CD4-positive, alpha-beta T cell (primary cell): ENCODE measurements at regions of chr22 and their contacts with region 1.

Region 1: DNA sequence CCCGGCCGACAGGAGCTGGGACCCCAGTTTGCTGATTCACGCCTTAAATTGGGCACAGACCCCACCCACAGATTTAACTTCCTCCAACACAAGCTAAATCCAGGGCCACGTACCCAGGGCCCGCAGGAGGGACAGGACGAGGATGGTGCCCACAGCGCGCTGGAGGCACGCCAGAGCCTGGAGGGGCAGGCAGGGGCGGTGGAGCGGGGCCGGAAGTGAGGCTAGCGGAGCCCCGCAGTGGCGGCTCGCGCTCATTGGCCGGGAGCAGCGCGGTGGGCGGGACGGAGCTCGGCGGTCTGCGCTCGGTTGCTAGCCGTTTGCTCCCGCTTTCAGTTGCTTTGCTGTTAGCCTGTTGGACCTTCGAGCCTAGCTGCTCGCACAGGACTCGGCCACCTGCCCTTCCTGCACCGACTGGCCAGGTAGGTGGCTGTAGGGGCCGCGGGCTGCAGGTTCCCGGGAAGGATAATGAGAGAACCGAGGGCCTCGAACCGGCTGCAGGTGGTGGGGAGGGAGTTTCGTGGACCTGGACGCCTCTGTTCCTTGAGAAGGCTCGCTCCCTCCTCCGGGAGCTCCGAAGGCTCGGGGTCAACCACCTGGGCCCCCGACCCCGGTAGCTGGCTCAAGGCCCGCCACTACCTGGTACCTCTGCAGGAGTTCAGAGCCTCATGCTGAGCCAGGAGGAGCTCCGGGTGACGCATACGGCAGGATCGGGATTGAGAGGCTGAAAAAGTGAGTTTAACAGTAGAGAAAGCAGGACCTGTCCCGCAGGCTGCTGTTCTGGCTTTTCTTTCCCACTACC is at the start of gene CCDC134:
- DNase-seq: peak; percentile 85 to 95 (median 90)
- ATAC-seq: peak; percentile 95
- H3K4me3 ChIP-seq: peak within 1 kb of the TSS; percentile 80
- H3K4me3 Mint-ChIP-seq: peak within 1 kb of the TSS; percentile 98
- H3K27ac ChIP-seq: peak within 1 kb of the TSS; percentile 87 to 91
- H3K27ac Mint-ChIP-seq: peak within 1 kb of the TSS; percentile 100
- H3K4me1 ChIP-seq: peaks cover 34% of the 10 kb centered on the region
- H3K4me1 Mint-ChIP-seq: peaks cover 40% of the 10 kb centered on the region
- H3K27me3 ChIP-seq: no peaks in the 10 kb centered on the region
- H3K27me3 Mint-ChIP-seq: no peaks in the 10 kb centered on the region
- CTCF ChIP-seq: no peak
- total RNA-seq, gene CCDC134: 14.1 to 16.2 TPM

Region 2: GRCh38 chr22:41666661-41667258 is 133.8 kb before region 1 on chr22:
- CTCF ChIA-PET with region 1: interaction called, 6 read pairs
- POLR2A ChIA-PET with region 1: interaction called, 12 read pairs
- intact Hi-C with region 1: no loop called
- DNase-seq: peak; percentile 84 to 97 (median 93)
- ATAC-seq: peak; percentile 92
- H3K4me3 ChIP-seq: peak overlapping the region; percentile 58
- H3K4me3 Mint-ChIP-seq: peak overlapping the region; percentile 90
- H3K27ac ChIP-seq: peak overlapping the region; percentile 77 to 85
- H3K27ac Mint-ChIP-seq: peak overlapping the region; percentile 94
- H3K4me1 ChIP-seq: peaks cover 17% of the 10 kb centered on the region
- H3K4me1 Mint-ChIP-seq: peaks cover 13% of the 10 kb centered on the region
- H3K27me3 ChIP-seq: no peaks in the 10 kb centered on the region
- H3K27me3 Mint-ChIP-seq: no peaks in the 10 kb centered on the region
- CTCF ChIP-seq: peak; percentile 97

Region 3: DNA sequence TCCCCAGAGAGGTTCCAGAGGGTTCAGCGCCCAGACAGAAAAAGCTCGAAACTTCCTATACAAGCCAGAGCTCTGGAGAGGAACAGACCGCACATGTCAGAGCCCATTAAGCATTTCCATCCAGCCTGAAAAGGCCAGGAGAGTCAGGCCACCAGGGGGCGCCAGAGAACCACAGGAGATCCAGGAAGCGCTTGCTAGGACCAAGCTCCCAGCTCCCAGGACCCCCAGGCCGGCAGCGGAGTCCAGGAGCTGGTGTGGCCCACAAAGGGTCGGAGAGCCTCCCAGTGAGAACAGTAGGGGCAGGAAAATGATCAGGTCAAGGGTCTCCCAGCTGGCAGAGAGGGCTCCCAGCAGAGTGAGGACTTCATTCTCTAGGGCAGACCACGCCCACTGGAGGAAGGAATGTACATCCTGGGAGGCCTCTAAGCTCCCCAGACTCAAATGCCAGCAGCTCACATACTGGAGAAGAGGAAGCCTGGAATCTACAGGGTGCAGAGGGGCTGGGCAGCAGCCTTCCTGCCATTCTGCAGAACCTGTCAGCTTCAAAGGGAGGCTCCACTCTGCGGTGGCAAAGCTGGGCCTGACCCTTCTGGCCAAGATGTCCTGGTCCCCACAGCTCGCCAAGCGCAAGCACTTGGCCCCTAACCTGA is 103.3 kb before region 1 on chr22:
- CTCF ChIA-PET with region 1: interaction called, 16 read pairs
- POLR2A ChIA-PET with region 1: interaction called, 28 read pairs
- intact Hi-C with region 1: loop called (anchors 1 to 5 kb)
- DNase-seq: peak; percentile 84 to 98 (median 92)
- ATAC-seq: peak; percentile 78
- H3K4me3 ChIP-seq: peak overlapping the region; percentile 24
- H3K4me3 Mint-ChIP-seq: peak overlapping the region; percentile 59
- H3K27ac ChIP-seq: no peak overlapping the region
- H3K27ac Mint-ChIP-seq: no peak overlapping the region
- H3K4me1 ChIP-seq: peaks cover 24% of the 10 kb centered on the region
- H3K4me1 Mint-ChIP-seq: peaks cover 12% of the 10 kb centered on the region
- H3K27me3 ChIP-seq: no peaks in the 10 kb centered on the region
- H3K27me3 Mint-ChIP-seq: no peaks in the 10 kb centered on the region
- CTCF ChIP-seq: peak; percentile 98

Region 4: DNA sequence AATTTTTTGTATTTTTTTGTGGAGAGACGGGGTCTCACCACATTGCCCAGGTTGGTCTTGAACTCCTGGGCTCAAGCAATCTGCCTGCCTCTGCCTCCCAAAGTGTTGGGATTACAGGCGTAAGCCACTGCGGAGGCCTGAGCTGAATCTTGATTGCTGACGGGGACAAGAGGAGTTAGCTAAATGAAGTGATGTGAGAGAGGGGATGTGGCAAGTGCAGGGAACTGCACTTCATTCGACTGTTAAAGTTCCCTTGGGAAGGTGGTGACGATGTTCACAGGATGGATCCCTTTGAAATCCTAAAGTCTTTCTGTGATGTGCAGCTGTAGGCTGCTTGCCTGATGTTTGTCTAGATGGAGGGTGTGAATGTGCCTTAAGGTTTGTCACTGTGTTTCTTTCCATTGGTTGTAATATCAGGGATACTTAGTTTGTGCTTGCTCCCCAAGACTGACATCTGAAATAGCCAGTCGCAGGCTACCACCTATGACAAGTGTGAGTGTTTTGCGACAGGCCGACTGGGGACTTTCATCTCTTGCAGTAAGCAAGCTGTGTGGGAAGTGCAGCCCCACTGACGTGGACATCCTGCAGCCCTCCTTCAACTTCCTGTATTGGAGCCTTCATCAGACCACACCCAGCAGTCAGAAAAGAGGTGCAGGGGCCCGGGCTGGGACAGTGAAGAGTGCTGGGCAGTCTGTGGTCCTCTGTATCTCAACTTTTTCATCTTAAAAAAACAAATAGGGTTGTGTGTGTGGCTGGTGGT is 19.6 kb before region 1 on chr22:
- CTCF ChIA-PET with region 1: interaction called, 24 read pairs
- POLR2A ChIA-PET with region 1: interaction called, 472 read pairs
- intact Hi-C with region 1: loop called (anchors 1 kb)
- DNase-seq: peak; percentile 78 to 98 (median 88)
- ATAC-seq: peak; percentile 91
- H3K4me3 ChIP-seq: peak overlapping the region; percentile 69
- H3K4me3 Mint-ChIP-seq: peak overlapping the region; percentile 86
- H3K27ac ChIP-seq: peak overlapping the region; percentile 77 to 94
- H3K27ac Mint-ChIP-seq: peak overlapping the region; percentile 96
- H3K4me1 ChIP-seq: peaks cover 57% of the 10 kb centered on the region
- H3K4me1 Mint-ChIP-seq: peaks cover 54% of the 10 kb centered on the region
- H3K27me3 ChIP-seq: no peaks in the 10 kb centered on the region
- H3K27me3 Mint-ChIP-seq: no peaks in the 10 kb centered on the region
- CTCF ChIP-seq: no peak

Region 5: DNA sequence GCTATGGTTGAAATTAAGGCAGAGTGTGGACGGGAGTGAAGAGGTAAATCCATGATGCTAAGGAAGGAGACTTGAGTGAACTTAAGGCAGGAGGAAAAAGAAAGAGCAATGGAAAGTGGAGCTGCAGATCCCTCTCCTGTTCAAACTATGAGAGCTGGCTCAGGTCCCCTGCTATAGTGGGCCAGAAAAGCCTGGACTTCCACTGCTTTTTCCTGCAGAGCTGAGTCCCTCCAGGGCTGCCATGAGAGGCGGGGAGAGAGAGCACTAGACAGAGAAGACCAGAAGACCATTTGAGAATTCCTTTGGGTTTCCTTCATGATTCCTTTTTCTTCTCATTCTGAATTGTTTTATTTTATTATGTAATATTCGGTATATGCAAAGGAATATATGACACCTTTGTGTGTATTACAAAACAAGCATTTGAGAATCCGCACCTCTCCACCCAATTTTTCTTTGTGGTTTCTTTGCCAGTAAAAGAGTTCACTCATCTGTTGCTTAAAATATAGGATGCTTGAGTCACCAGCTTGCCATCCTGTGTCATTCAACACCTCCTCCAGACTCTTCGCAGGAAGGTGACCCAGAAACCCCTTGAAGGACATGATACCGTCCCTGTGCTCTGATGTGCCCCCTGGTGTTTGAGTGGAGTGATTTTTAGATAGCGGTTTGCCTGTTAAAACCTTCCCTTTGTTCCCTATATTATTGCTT is 56.8 kb after region 1 on chr22:
- CTCF ChIA-PET with region 1: interaction called, 5 read pairs
- POLR2A ChIA-PET with region 1: interaction called, 13 read pairs
- intact Hi-C with region 1: no loop called
- DNase-seq: peak; percentile 46 to 89 (median 63)
- ATAC-seq: peak; percentile 75
- H3K4me3 ChIP-seq: no peak overlapping the region
- H3K4me3 Mint-ChIP-seq: peak overlapping the region; percentile 13
- H3K27ac ChIP-seq: no peak overlapping the region
- H3K27ac Mint-ChIP-seq: peak overlapping the region; percentile 59
- H3K4me1 ChIP-seq: peaks cover 49% of the 10 kb centered on the region
- H3K4me1 Mint-ChIP-seq: peaks cover 45% of the 10 kb centered on the region
- H3K27me3 ChIP-seq: no peaks in the 10 kb centered on the region
- H3K27me3 Mint-ChIP-seq: no peaks in the 10 kb centered on the region
- CTCF ChIP-seq: peak; percentile 72

Region 6: GRCh38 chr22:41946629-41947423 is 146.3 kb after region 1 on chr22 and contains the start of gene CENPM:
- CTCF ChIA-PET with region 1: interaction called, 4 read pairs
- POLR2A ChIA-PET with region 1: interaction called, 56 read pairs
- intact Hi-C with region 1: no loop called
- DNase-seq: peak; percentile 71 to 91 (median 82)
- ATAC-seq: peak; percentile 94
- H3K4me3 ChIP-seq: peak within 1 kb of the TSS; percentile 95
- H3K4me3 Mint-ChIP-seq: peak within 1 kb of the TSS; percentile 97
- H3K27ac ChIP-seq: no peak within 1 kb of the TSS
- H3K27ac Mint-ChIP-seq: peak within 1 kb of the TSS; percentile 62
- H3K4me1 ChIP-seq: peaks cover 25% of the 10 kb centered on the region
- H3K4me1 Mint-ChIP-seq: peaks cover 15% of the 10 kb centered on the region
- H3K27me3 ChIP-seq: no peaks in the 10 kb centered on the region
- H3K27me3 Mint-ChIP-seq: no peaks in the 10 kb centered on the region
- CTCF ChIP-seq: no peak
- total RNA-seq, gene CENPM: 7.6 to 8.4 TPM

Region 7: GRCh38 chr22:41995211-41995610 is 194.7 kb after region 1 on chr22:
- CTCF ChIA-PET with region 1: no interaction called
- POLR2A ChIA-PET with region 1: no interaction called
- intact Hi-C with region 1: no loop called
- DNase-seq: no peak
- ATAC-seq: no peak
- H3K4me3 ChIP-seq: no peak overlapping the region
- H3K4me3 Mint-ChIP-seq: no peak overlapping the region
- H3K27ac ChIP-seq: no peak overlapping the region
- H3K27ac Mint-ChIP-seq: no peak overlapping the region
- H3K4me1 ChIP-seq: peaks cover 23% of the 10 kb centered on the region
- H3K4me1 Mint-ChIP-seq: peaks cover 22% of the 10 kb centered on the region
- H3K27me3 ChIP-seq: no peaks in the 10 kb centered on the region
- H3K27me3 Mint-ChIP-seq: no peaks in the 10 kb centered on the region
- CTCF ChIP-seq: no peak